ENCODE measurements at regions of chr16 and their contacts with region 1.

Region 1: DNA sequence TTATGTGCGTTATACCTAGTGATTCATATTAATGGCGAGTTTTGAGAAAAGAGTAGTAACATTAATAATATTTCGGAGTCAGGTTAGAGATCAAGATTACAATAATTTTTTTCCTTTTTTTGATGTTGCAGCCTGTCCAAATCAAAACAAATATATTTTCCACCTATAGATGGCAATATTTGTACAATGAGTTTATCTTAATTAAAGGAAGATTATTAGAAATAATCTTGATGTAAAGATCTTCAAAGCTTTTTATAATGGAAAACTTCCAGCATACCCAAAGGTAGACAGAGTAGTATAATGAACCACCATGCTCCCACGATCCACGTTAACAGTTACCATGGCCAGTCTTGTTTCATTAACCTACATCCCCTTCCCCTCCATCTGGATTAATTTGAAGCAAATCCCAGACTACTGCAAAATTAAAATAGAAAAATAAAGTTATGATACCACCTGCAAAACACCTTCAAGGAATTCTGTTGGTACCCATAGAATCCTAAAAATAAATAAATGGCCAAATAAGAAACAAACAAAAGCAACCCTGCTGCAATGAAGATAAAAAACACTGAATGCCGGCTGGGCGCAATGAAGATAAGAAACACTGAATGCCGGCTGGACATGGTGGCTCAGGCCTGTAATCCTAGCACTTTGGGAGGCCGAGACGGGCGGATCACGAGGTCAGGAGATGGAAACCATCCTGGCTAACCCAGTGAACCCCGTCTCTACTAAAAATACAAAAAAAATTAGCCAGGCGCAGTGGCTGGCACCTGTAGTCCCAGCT is 46.5 kb upstream of the GINS3 start:
- DNase-seq: no peak
- ATAC-seq: peak; percentile 48; the same call in 1 of the 2 replicates
- H3K4me3 ChIP-seq: peak overlapping the region in 1 of 2 experiments; percentile 21; a peak in 2 of 4 replicates
- H3K27ac ChIP-seq: no peak overlapping the region
- H3K4me1 ChIP-seq: no peaks in the 10 kb centered on the region
- H3K27me3 ChIP-seq: no peaks in the 10 kb centered on the region
- CTCF ChIP-seq: peak; percentile 41; the same call in 1 of the 2 replicates

Region 2: DNA sequence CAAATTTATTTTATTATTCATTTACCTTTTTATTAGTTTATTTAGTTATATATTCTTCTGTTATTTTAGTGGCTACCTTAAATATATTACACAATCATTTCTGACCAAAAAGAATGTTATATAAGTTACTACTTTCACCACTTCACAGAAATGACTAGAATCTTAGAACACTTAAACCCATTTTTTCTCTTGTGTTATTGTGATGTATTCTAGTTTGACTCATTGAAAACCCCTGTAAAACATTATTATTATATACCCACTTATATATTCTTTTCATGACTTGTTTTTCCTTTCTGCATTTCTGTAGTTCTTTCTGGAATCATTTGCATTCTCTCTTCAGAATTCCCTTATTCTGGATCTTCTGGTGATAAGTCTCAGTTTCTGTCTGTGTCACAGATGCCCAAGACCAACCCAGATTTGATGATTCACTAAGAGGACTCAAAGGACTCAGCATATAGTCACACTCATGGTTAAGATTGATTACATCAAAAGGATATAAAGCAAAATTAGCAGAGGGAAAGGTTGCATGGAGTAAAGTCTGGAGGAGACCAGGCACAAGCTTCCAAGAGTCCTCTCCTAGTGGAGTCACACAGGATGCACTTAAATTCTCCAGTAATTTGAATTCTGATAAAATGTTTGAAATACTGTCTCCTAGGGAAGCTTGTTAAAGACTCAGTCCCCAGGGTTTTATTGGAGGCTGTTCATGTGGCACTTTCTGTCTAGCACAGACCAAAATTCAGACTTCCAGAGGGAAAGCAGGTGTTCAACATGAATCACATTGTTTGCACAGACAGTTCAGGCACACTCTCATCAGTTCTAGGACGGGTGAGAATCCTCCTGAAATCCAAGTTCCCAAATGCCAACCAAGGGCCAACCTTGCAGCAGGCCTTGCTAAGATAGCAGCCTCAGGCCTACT is 54.2 kb after region 1 on chr16:
- CTCF ChIA-PET with region 1: no interaction called
- POLR2A ChIA-PET with region 1: no interaction called
- in situ Hi-C with region 1: no loop called
- intact Hi-C with region 1: no loop called
- DNase-seq: no peak
- ATAC-seq: no peak
- H3K4me3 ChIP-seq: no peak overlapping the region
- H3K27ac ChIP-seq: no peak overlapping the region
- H3K4me1 ChIP-seq: no peaks in the 10 kb centered on the region
- H3K27me3 ChIP-seq: no peaks in the 10 kb centered on the region
- CTCF ChIP-seq: no peak

Region 3: DNA sequence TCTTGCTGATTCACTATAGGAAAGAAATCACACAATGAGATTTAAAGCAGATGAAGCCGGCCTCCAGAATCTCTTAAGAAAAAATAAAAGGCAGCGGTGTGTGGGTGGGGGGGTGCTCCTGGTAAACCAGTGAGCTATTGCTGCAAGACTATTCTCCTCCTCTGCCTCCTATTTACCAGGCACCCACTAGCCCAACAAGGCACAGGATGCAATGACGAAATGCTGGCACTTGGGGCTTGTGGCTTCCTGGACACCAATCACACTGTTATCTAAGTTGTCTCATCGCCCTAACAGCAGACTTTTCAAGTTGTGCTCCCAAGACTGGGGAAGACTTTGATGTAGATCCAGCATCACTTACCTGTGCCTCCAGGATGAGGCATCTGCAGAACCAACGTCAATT is 104.0 kb after region 1 on chr16:
- CTCF ChIA-PET with region 1: interaction called, 10 read pairs
- POLR2A ChIA-PET with region 1: no interaction called
- in situ Hi-C with region 1: no loop called
- intact Hi-C with region 1: no loop called
- DNase-seq: no peak
- ATAC-seq: no peak
- H3K4me3 ChIP-seq: no peak overlapping the region
- H3K27ac ChIP-seq: no peak overlapping the region
- H3K4me1 ChIP-seq: no peaks in the 10 kb centered on the region
- H3K27me3 ChIP-seq: no peaks in the 10 kb centered on the region
- CTCF ChIP-seq: no peak